Naive thymus-derived CD8-positive, alpha-beta T cell (primary cell): ENCODE measurements at regions of chr14 and their contacts with region 1.

Region 1: GRCh38 chr14:73613046-73613383 is 698 bp downstream of the ACOT6 start:
- DNase-seq: no peak
- ATAC-seq: peak in 1 of 2 donors; percentile 15
- H3K4me3 Mint-ChIP-seq: peak overlapping the region; percentile 81 to 92 (median 86)
- H3K27ac Mint-ChIP-seq: peak overlapping the region; percentile 68 to 94 (median 88)
- H3K4me1 Mint-ChIP-seq: peaks cover 0 to 5% (median 2%) of the 10 kb centered on the region in 4 donors
- H3K27me3 Mint-ChIP-seq: peaks cover 0 to 2% (median 0%) of the 10 kb centered on the region in 5 donors

Region 2: GRCh38 chr14:73568381-73568781 is 44.6 kb before region 1 on chr14:
- POLR2A ChIA-PET with region 1: interaction called, 49 read pairs
- DNase-seq: peak in 2 of 10 donors; percentile 4 to 18
- ATAC-seq: peak in 1 of 2 donors; percentile 7
- H3K4me3 Mint-ChIP-seq: peak overlapping the region; percentile 79 to 98 (median 95)
- H3K27ac Mint-ChIP-seq: peak overlapping the region; percentile 87 to 99 (median 98)
- H3K4me1 Mint-ChIP-seq: peaks cover 25 to 52% (median 45%) of the 10 kb centered on the region in 4 donors
- H3K27me3 Mint-ChIP-seq: no peaks in the 10 kb centered on the region

Region 3: DNA sequence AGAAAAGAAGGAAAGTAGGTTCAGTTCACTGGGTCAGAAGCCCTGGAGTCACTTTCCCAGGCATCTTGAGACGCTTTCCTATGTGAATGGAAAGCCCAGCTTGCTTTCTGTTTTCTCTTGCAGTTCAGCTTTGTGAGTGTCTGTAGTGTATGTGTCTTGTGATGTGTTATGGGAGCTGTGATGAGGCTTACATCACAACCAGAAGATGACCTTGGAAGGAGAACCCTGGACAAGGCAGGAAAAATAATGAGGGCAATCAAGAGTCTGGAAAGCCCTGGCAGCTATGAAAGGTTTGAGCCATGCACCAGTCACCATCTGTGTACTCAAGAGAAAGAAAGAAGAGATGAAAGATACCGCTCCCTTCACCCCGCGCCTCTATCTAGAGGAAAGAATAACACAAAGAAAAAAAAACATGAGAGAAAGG is 203.4 kb after region 1 on chr14:
- POLR2A ChIA-PET with region 1: no interaction called
- DNase-seq: no peak
- ATAC-seq: no peak
- H3K4me3 Mint-ChIP-seq: no peak overlapping the region
- H3K27ac Mint-ChIP-seq: peak overlapping the region in 1 of 10 donors; percentile 72
- H3K4me1 Mint-ChIP-seq: peaks cover 0 to 3% (median 1%) of the 10 kb centered on the region in 4 donors
- H3K27me3 Mint-ChIP-seq: peaks cover 0 to 2% (median under 1%) of the 10 kb centered on the region in 5 donors

Region 4: DNA sequence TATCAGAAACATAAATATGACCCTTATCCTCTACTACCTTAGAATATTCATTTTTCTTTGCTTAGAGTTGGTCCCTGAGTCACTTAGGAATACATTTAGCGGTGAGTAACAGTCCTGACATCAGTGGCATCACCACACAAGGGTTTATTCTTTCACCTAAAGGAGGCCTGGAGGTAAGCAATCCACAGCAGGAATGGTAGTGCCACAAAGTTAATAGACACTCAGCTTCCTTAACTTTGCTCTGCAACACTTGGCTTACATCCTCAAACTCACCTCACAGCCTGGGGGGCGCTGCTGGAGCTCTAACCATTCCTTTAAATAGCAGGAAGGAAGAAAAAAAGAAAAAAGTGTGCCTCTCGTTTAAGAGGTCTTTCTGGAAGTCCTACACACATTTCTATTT is 435.3 kb after region 1 on chr14:
- POLR2A ChIA-PET with region 1: no interaction called
- DNase-seq: no peak
- ATAC-seq: no peak
- H3K4me3 Mint-ChIP-seq: no peak overlapping the region
- H3K27ac Mint-ChIP-seq: peak overlapping the region in 1 of 10 donors; percentile 25
- H3K4me1 Mint-ChIP-seq: peaks cover 0 to 4% (median 0%) of the 10 kb centered on the region in 4 donors
- H3K27me3 Mint-ChIP-seq: no peaks in the 10 kb centered on the region